CD4-positive, alpha-beta memory T cell (primary cell): ENCODE measurements at regions of chr21 and their contacts with region 1.

Region 1: GRCh38 chr21:39518138-39518846 is 66.5 kb downstream of the SH3BGR start:
- DNase-seq: peak in 4 of 5 donors; percentile 41 to 58 (median 52)
- H3K4me3 ChIP-seq: no peak overlapping the region
- H3K4me3 Mint-ChIP-seq: no peak overlapping the region
- H3K27ac ChIP-seq: no peak overlapping the region
- H3K27ac Mint-ChIP-seq: no peak overlapping the region
- H3K4me1 ChIP-seq: peaks cover 3% of the 10 kb centered on the region
- H3K4me1 Mint-ChIP-seq: peaks cover 3 to 5% (median 4%) of the 10 kb centered on the region in 4 donors
- H3K27me3 ChIP-seq: no peaks in the 10 kb centered on the region
- H3K27me3 Mint-ChIP-seq: peaks cover 3 to 9% of the 10 kb centered on the region in 2 donors

Region 2: DNA sequence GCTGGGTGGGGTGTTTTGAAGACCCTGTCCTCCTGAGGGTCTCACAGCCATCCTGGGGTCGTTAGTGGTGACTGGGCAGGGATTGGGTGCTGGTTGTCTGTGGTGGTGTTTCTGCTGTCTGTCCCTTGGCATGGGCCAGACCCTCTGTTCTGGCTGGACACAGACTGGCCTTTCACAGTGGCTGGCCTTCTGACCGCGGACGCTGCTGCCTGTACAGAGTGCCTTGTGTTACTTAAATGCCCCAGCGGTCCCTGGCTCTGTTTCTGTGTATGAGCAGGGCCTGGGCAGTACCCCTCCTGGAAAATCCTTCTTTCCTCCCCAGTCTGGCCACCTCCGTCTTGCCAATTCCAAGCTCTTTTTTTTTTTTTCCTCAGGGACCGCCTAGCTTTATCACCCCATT is 15.7 kb before region 1 on chr21:
- CTCF ChIA-PET with region 1: interaction called, 13 read pairs
- POLR2A ChIA-PET with region 1: no interaction called
- intact Hi-C with region 1: no loop called
- DNase-seq: no peak
- H3K4me3 ChIP-seq: no peak overlapping the region
- H3K4me3 Mint-ChIP-seq: no peak overlapping the region
- H3K27ac ChIP-seq: no peak overlapping the region
- H3K27ac Mint-ChIP-seq: no peak overlapping the region
- H3K4me1 ChIP-seq: no peaks in the 10 kb centered on the region
- H3K4me1 Mint-ChIP-seq: no peaks in the 10 kb centered on the region
- H3K27me3 ChIP-seq: no peaks in the 10 kb centered on the region
- H3K27me3 Mint-ChIP-seq: no peaks in the 10 kb centered on the region